HepG2 (cell line): ENCODE measurements at regions of chr2 and their contacts with region 1.

Region 1: DNA sequence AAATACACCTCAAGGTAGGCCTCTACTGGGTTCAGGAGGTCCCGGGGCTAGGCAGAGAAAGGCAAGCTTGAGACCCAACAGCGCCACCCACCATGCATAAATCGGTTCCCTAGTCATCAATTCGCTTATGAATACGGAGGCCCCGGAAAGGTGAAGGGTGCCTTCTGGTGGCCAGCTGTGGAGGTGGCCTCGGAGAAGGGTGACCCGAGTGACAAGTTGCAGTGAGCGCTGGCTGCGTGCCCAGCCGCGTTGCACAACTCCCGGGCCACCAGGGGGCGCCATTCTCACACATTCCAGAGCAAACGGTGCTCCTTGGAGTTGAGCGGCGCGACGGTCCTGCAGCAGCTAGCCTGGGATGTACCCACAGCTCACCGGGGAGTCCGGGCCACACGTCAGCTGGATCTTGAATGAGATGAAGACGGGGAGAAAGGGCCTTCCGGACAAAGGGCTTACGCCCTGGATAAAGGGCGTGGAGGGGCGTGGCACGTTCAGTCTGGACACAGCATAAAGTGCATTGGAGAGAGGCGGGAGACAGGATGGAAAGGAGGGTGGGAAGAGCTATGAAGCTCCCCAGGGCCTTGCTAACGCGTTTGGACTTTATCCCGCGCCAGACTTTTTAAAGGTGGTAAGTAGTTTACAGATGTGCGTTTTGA is 20.4 kb downstream of the TMSB10 start:
- DNase-seq: peak; percentile 98
- ATAC-seq: peak; percentile 87
- H3K4me3 ChIP-seq: peak overlapping the region; percentile 66 to 80 (median 74)
- H3K27ac ChIP-seq: peak overlapping the region; percentile 25
- H3K4me1 ChIP-seq: peaks cover 42% of the 10 kb centered on the region
- H3K27me3 ChIP-seq: no peaks in the 10 kb centered on the region
- CTCF ChIP-seq: peak; percentile 100
- EP300 ChIP-seq: peak; percentile 61 to 82; a peak in 3 of 4 replicates
- POLR2A ChIP-seq: no peak; a peak in 2 of 4 replicates
- RAD21 ChIP-seq: peak; percentile 100

Region 2: GRCh38 chr2:84424152-84424551 is 501.7 kb before region 1 on chr2:
- CTCF ChIA-PET with region 1: no interaction called
- POLR2A ChIA-PET with region 1: no interaction called
- in situ Hi-C with region 1: no loop called
- intact Hi-C with region 1: no loop called
- DNase-seq: no peak
- ATAC-seq: 0 out of 3 replicates have a peak, but pooled peaks have one; percentile 32
- H3K4me3 ChIP-seq: no peak overlapping the region
- H3K27ac ChIP-seq: no peak overlapping the region
- H3K4me1 ChIP-seq: 0 out of 2 replicates have a peak, but pooled peaks cover 5% of the 10 kb centered on the region
- H3K27me3 ChIP-seq: no peaks in the 10 kb centered on the region
- CTCF ChIP-seq: peak; percentile 52
- EP300 ChIP-seq: no peak
- POLR2A ChIP-seq: no peak
- RAD21 ChIP-seq: no peak

Region 3: DNA sequence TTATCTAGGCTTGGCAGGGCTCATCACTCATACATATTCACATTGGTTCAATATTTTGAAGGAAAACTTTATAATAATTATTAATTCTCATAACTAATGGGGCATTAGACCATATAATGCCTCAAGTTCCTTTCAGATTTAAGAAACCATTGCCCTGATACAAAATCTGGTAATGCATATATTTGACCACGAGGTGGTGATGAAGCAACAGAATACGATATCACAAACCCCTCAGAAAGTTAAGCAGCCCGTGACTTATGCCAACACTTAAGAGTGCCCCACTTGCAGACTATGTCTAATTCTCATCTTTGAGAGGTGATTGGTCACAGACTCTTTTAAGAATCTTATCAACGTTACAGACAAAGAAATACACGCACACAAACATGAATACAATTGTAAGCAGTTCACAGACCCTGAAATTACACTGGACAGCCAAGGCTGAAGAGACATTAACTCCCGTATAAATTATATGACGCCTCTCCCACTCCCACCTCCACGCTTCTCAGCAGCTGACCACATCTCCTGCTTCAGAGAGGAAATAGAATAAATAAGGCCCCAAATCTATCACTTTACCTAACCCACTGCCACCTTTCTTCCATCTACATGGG is 430.2 kb before region 1 on chr2:
- CTCF ChIA-PET with region 1: interaction called, 17 read pairs
- POLR2A ChIA-PET with region 1: no interaction called
- in situ Hi-C with region 1: no loop called
- intact Hi-C with region 1: loop called (anchors 1 kb)
- DNase-seq: peak; percentile 64
- ATAC-seq: peak; percentile 90
- H3K4me3 ChIP-seq: no peak overlapping the region
- H3K27ac ChIP-seq: no peak overlapping the region
- H3K4me1 ChIP-seq: peaks cover 5% of the 10 kb centered on the region; the same call in 1 of the 2 replicates
- H3K27me3 ChIP-seq: no peaks in the 10 kb centered on the region
- CTCF ChIP-seq: peak; percentile 81
- EP300 ChIP-seq: no peak
- POLR2A ChIP-seq: no peak
- RAD21 ChIP-seq: peak; percentile 65

Region 4: GRCh38 chr2:84905181-84906107 is 20.4 kb before region 1 on chr2 and contains the start of gene TMSB10:
- CTCF ChIA-PET with region 1: interaction called, 64 read pairs
- POLR2A ChIA-PET with region 1: interaction called, 141 read pairs
- in situ Hi-C with region 1: no loop called
- intact Hi-C with region 1: loop called (anchors 2 kb)
- DNase-seq: peak; percentile 73
- ATAC-seq: peak; percentile 88
- H3K4me3 ChIP-seq: peak within 1 kb of the TSS; percentile 90 to 98 (median 98)
- H3K27ac ChIP-seq: peak within 1 kb of the TSS; percentile 65
- H3K4me1 ChIP-seq: peaks cover 31% of the 10 kb centered on the region
- H3K27me3 ChIP-seq: peaks cover 2 to 32% of the 10 kb centered on the region in 2 experiments; a peak in 2 of 5 replicates
- CTCF ChIP-seq: peak; percentile 35; the same call in 1 of the 2 replicates
- EP300 ChIP-seq: peak in 1 of 2 experiments; percentile 29; a peak in 1 of 4 replicates
- POLR2A ChIP-seq: peak; percentile 87 to 99
- RAD21 ChIP-seq: peak; percentile 61
- total RNA-seq, gene TMSB10: 708 and 754 TPM in 2 replicates

Region 5: GRCh38 chr2:84963692-84964405 is 38.0 kb after region 1 on chr2:
- CTCF ChIA-PET with region 1: interaction called, 5 read pairs
- POLR2A ChIA-PET with region 1: interaction called, 28 read pairs
- in situ Hi-C with region 1: no loop called
- intact Hi-C with region 1: loop called (anchors 1 kb)
- DNase-seq: peak; percentile 99
- ATAC-seq: peak; percentile 95
- H3K4me3 ChIP-seq: peak overlapping the region in 1 of 3 experiments; percentile 36; a peak in 1 of 6 replicates
- H3K27ac ChIP-seq: peak overlapping the region; percentile 87
- H3K4me1 ChIP-seq: peaks cover 88% of the 10 kb centered on the region
- H3K27me3 ChIP-seq: no peaks in the 10 kb centered on the region
- CTCF ChIP-seq: no peak
- EP300 ChIP-seq: peak; percentile 53 to 91; a peak in 2 of 4 replicates
- POLR2A ChIP-seq: peak; percentile 41 to 80; a peak in 3 of 4 replicates
- RAD21 ChIP-seq: no peak

Region 6: GRCh38 chr2:85011747-85012146 is 85.9 kb after region 1 on chr2:
- CTCF ChIA-PET with region 1: interaction called, 64 read pairs
- POLR2A ChIA-PET with region 1: no interaction called
- in situ Hi-C with region 1: loop called (anchors 5 kb)
- intact Hi-C with region 1: loop called (anchors 1 kb)
- DNase-seq: peak; percentile 30
- ATAC-seq: peak; percentile 82
- H3K4me3 ChIP-seq: no peak overlapping the region
- H3K27ac ChIP-seq: no peak overlapping the region
- H3K4me1 ChIP-seq: peaks cover 17% of the 10 kb centered on the region
- H3K27me3 ChIP-seq: no peaks in the 10 kb centered on the region
- CTCF ChIP-seq: peak; percentile 57
- EP300 ChIP-seq: no peak
- POLR2A ChIP-seq: no peak
- RAD21 ChIP-seq: no peak

Region 7: GRCh38 chr2:85308896-85309555 is 383.2 kb after region 1 on chr2:
- CTCF ChIA-PET with region 1: no interaction called
- POLR2A ChIA-PET with region 1: interaction called, 4 read pairs
- in situ Hi-C with region 1: no loop called
- intact Hi-C with region 1: loop called (anchors 10 kb)
- DNase-seq: peak; percentile 46
- ATAC-seq: peak; percentile 59
- H3K4me3 ChIP-seq: peak overlapping the region; percentile 30 to 70 (median 37); a peak in 5 of 6 replicates
- H3K27ac ChIP-seq: peak overlapping the region; percentile 8
- H3K4me1 ChIP-seq: peaks cover 82% of the 10 kb centered on the region
- H3K27me3 ChIP-seq: no peaks in the 10 kb centered on the region
- CTCF ChIP-seq: 0 out of 2 replicates have a peak, but pooled peaks have one; percentile 2
- EP300 ChIP-seq: no peak
- POLR2A ChIP-seq: 0 out of 4 replicates have a peak, but pooled peaks of 1 of the 2 experiments have one; percentile 17
- RAD21 ChIP-seq: 0 out of 2 replicates have a peak, but pooled peaks have one; percentile 21